ENCODE measurements at regions of chr5 and their contacts with region 1.

Region 1: DNA sequence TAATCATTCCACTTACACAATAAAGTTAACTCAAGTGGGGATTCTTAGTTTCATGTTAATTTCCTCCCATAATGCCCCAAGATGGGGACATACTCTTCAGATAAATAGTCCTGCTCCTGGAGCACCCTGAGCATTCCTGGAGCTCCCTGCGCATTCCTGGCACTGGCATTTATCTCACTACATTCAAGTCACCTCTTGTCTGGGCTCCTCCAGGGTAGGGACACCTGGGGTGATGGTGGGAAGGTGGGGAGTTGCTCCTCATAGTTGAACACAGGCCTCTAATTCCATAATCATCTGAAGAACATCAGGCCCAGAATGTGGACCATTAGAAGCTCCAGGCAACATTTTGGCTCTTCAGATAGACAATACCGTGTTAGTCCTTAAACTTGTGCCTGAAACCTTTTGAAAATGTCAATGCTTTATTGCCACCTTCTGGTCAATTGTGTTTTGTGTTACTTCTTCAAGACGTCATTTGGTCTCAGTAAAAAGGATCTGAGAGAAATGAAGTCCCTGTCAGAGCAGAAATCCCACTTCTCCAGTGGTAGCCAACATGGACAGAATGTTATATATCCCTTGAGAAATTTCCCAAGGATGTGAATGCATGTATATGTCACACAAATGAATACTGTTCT is 14.2 kb upstream of the AGGF1 start:
- DNase-seq: peak; percentile 4
- H3K4me3 ChIP-seq: no peak overlapping the region
- CTCF ChIP-seq: no peak

Region 2: DNA sequence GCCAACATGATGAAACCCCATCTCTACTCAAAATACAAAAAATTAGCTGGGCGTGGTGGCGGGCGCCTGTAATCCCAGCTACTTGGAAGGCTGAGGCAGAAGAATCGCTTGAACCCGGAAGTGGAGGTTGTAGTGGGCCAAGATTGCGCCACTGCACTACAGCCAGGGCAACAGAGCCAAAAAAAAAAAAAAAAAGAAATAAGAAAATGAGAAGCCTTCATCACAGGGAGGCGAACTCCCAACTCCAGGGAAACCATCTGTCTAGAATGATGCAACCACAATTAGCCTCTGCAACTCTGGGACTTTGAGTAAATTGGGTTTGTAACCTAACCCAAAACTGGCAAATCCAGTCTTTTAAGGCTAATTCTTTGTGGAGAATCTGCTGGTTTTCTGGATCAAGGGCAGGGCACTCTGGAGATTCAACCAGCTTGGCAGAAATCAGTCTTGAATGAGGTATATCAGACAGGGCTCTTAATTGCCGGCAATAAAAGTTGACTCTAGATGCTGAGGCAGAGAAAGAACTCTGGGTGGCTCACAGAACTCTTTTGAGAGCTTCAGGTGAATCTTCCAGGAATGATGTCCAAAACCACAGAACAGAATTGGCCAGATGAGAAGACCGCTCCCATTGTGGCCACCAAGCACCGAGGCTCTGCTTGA is 156.3 kb before region 1 on chr5:
- CTCF ChIA-PET with region 1: interaction called, 153 read pairs
- POLR2A ChIA-PET with region 1: no interaction called
- DNase-seq: no peak
- H3K4me3 ChIP-seq: no peak overlapping the region
- CTCF ChIP-seq: no peak

Region 3: GRCh38 chr5:76867827-76868693 is 148.0 kb before region 1 on chr5:
- CTCF ChIA-PET with region 1: interaction called, 153 read pairs
- POLR2A ChIA-PET with region 1: no interaction called
- DNase-seq: peak; percentile 16
- H3K4me3 ChIP-seq: no peak overlapping the region
- CTCF ChIP-seq: peak; percentile 63

Region 4: GRCh38 chr5:76874088-76874581 is 141.9 kb before region 1 on chr5:
- CTCF ChIA-PET with region 1: interaction called, 153 read pairs
- POLR2A ChIA-PET with region 1: no interaction called
- DNase-seq: no peak
- H3K4me3 ChIP-seq: no peak overlapping the region
- CTCF ChIP-seq: no peak

Region 5: DNA sequence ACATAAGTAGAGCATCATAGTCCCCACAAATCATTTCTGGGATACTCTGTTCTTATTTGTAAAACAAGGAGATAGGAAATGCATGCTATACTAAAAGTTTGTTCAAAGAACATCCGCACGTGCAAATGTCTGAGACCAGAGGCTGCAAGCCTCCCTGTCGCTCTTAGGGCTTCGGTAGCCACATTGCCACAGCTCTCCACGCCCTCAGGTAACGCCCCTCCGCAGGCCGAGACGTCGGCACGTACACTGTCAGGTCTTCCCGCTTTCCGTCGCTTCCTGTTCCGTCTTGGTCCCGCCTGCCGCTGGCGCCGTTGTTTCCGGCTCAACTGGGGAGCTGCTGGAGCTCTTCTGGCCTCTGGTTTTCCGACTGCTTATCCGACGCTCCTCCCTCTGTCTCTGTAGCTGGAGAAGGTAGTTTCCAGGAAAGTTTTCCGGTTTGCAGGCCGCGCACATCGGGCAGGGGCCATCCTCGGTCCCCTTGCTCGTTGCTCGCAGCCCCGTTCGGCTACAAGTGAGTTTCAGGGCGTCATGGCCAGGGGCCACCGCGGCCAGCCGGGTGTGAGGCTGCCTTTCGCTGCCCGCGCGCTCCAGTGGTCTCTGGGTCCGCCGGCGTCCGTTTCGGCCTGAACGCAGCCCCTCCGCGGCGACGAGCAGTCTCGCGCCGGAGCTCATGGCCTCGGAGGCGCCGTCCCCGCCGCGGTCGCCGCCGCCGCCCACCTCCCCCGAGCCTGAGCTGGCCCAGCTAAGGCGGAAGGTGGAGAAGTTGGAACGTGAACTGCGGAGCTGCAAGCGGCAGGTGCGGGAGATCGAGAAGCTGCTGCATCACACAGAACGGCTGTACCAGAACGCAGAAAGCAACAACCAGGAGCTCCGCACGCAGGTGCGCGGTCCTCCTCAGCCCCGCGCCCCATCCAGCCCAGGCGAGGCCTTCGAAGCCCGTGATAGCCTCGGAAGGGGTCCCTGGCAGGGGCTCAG is 14.3 kb after region 1 on chr5 and contains the start of gene AGGF1:
- CTCF ChIA-PET with region 1: interaction called, 14 read pairs
- POLR2A ChIA-PET with region 1: no interaction called
- DNase-seq: peak; percentile 57
- H3K4me3 ChIP-seq: peak within 1 kb of the TSS; percentile 90
- CTCF ChIP-seq: no peak